ENCODE measurements at regions of chr1 and their contacts with region 1.

Region 1: GRCh38 chr1:156689035-156689952 is 12.1 kb upstream of the NES start:
- DNase-seq: peak; percentile 92
- H3K4me3 Mint-ChIP-seq: peak overlapping the region; percentile 15
- H3K27ac Mint-ChIP-seq: peak overlapping the region; percentile 2
- H3K4me1 Mint-ChIP-seq: peaks cover 38% of the 10 kb centered on the region
- H3K27me3 Mint-ChIP-seq: no peaks in the 10 kb centered on the region
- CTCF ChIP-seq: peak; percentile 82

Region 2: DNA sequence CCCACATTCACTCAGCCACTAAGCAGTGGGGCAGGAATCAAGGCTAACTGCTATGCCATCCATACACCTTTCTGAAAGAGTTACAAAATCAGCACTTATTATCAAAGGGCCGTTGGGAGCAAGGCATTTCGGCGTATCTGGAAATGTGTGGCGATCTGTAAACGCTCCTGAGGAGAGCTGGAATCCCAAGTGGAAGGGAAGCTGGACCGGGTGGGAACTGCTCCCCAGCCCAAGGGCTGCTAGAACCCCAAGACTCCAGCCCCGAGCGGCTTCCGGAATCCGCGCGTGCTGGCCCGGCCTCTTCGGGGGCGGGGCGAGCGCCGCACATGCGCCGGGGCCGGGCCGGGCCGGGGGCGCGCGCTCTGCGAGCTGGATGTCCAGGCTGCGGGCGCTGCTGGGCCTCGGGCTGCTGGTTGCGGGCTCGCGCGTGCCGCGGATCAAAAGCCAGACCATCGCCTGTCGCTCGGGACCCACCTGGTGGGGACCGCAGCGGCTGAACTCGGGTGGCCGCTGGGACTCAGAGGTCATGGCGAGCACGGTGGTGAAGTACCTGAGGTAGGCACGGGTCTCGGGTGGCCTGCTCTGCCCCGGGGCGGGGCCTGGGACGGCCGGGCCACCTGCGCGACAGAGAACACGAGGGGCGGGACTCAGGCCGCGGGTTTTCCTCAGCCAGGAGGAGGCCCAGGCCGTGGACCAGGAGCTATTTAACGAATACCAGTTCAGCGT is 97.7 kb before region 1 on chr1 and contains the start of gene NAXE:
- CTCF ChIA-PET with region 1: no interaction called
- intact Hi-C with region 1: no loop called
- DNase-seq: peak; percentile 82
- H3K4me3 Mint-ChIP-seq: peak within 1 kb of the TSS; percentile 76
- H3K27ac Mint-ChIP-seq: peak within 1 kb of the TSS; percentile 60
- H3K4me1 Mint-ChIP-seq: peaks cover 6% of the 10 kb centered on the region
- H3K27me3 Mint-ChIP-seq: no peaks in the 10 kb centered on the region
- CTCF ChIP-seq: no peak
- total RNA-seq, gene NAXE: 129 and 143 TPM in 2 replicates

Region 3: GRCh38 chr1:156625436-156626078 is 63.7 kb before region 1 on chr1:
- CTCF ChIA-PET with region 1: interaction called, 13 read pairs
- intact Hi-C with region 1: no loop called
- DNase-seq: peak; percentile 72
- H3K4me3 Mint-ChIP-seq: peak overlapping the region; percentile 45
- H3K27ac Mint-ChIP-seq: no peak overlapping the region
- H3K4me1 Mint-ChIP-seq: peaks cover 12% of the 10 kb centered on the region
- H3K27me3 Mint-ChIP-seq: peaks cover 60% of the 10 kb centered on the region
- CTCF ChIP-seq: peak; percentile 87

Region 4: DNA sequence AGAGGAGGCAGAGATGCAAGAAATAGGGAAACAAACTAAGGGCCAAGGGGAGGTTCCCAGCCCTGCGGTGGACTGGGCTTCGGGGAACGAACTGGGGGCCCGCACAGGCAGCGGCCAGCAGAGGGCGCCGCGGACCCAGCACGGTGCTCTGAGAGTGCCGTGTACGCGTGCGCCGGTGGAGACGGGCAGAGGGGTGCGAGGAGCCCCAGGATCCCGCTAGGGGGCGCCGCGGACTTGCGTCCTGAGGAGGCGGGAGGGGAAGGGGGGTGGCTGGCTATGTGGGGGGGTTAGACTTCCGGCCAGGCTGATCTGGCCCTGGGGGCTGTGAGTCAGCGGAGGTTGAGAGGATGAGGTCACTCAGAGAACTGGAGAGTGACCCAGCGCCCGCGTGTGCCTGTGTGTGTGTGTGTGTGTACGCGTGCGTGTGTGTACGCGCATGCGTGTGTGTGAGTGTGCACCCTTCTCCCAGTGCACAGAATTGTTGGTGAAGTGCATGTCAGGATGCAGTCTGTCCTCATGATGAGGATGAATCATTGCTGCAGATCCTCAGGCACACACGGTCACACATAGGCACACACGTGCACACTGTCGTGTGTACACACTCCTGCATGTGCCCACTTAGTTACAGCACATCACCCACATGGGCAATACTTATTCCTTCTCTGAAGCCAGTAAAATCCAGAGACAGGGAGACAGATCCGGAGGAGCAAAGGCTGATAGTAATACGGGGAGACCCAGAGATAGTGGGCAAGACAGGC is 29.1 kb before region 1 on chr1:
- CTCF ChIA-PET with region 1: interaction called, 21 read pairs
- intact Hi-C with region 1: no loop called
- DNase-seq: peak; percentile 99
- H3K4me3 Mint-ChIP-seq: peak overlapping the region; percentile 87
- H3K27ac Mint-ChIP-seq: peak overlapping the region; percentile 88
- H3K4me1 Mint-ChIP-seq: peaks cover 77% of the 10 kb centered on the region
- H3K27me3 Mint-ChIP-seq: no peaks in the 10 kb centered on the region
- CTCF ChIP-seq: peak; percentile 98

Region 5: DNA sequence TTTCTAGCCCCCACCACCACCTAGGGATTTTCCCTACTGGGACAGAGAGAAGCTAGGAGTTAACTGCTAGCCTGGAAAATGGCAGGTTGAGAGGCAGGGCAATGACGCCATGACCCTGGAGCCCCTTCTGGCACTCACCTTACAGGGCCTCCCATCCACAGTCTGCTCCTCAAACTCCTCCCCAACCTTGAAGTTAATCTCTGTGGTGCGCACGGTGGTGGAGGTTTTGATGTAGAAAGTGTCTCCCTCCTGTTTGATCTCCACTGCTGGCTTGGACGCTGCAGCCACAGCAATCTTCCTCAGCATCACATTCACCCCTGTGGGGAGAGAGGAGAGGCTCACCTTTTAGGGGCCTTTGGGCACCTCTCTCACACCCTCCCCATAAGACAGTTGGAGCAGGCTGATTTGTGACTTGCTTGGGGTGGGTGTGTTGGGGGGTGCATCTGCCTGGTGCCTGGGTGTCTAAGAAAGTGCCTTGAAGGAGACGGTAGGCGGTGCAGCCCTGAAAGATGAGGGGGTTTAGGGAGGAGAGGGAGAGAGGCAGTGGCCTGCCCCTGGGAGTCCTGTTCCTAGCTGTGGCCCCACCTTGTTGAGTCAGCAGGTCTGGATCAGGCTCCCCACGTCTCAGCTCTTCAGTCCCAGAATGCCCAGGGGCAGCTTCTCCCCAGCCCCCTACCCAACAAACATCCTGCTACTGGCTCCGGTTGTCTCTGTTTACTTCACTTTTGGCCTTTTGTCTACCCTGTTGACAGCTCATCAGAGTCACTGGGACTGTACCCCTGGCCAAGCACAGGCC is 11.6 kb after region 1 on chr1:
- CTCF ChIA-PET with region 1: interaction called, 130 read pairs
- intact Hi-C with region 1: loop called (anchors 1 kb)
- DNase-seq: no peak
- H3K4me3 Mint-ChIP-seq: no peak overlapping the region
- H3K27ac Mint-ChIP-seq: no peak overlapping the region
- H3K4me1 Mint-ChIP-seq: peaks cover 10% of the 10 kb centered on the region
- H3K27me3 Mint-ChIP-seq: peaks cover 5% of the 10 kb centered on the region
- CTCF ChIP-seq: no peak

Region 6: GRCh38 chr1:156705918-156706656 is 16.8 kb after region 1 on chr1:
- CTCF ChIA-PET with region 1: interaction called, 130 read pairs
- intact Hi-C with region 1: loop called (anchors 1 kb)
- DNase-seq: peak; percentile 72
- H3K4me3 Mint-ChIP-seq: peak overlapping the region; percentile 67
- H3K27ac Mint-ChIP-seq: peak overlapping the region; percentile 64
- H3K4me1 Mint-ChIP-seq: peaks cover 37% of the 10 kb centered on the region
- H3K27me3 Mint-ChIP-seq: peaks cover 13% of the 10 kb centered on the region
- CTCF ChIP-seq: peak; percentile 96

Region 7: DNA sequence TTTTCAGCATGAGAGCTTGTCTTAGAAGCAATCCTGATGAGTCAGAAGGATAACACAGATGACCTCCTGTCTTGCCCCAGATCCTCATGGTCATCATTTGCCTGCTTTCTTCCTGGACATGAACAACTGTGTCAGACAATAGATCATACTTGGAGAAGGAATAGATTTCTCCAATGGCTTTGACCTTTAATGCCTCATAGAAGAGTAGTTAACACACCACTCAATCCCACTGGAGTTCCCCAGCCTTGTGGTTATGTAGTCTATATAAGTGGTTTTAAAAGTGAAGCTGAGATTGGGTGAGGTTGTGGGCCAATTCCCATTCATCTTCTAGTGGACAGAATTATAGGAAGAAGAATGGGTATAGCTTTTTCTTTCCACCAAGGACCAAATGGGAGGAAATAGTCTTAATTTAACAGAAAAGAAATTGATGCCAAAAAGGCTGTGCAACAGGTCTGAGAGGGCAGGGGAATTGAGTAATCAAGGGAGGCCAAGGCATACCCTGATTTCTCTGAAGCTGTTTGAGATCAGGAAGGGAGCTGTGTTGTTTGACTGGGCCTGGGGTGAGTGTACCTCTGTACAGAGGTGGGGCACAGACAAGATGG is 92.4 kb after region 1 on chr1:
- CTCF ChIA-PET with region 1: no interaction called
- intact Hi-C with region 1: no loop called
- DNase-seq: no peak
- H3K4me3 Mint-ChIP-seq: no peak overlapping the region
- H3K27ac Mint-ChIP-seq: no peak overlapping the region
- H3K4me1 Mint-ChIP-seq: peaks cover 26% of the 10 kb centered on the region
- H3K27me3 Mint-ChIP-seq: no peaks in the 10 kb centered on the region
- CTCF ChIP-seq: no peak

Region 8: DNA sequence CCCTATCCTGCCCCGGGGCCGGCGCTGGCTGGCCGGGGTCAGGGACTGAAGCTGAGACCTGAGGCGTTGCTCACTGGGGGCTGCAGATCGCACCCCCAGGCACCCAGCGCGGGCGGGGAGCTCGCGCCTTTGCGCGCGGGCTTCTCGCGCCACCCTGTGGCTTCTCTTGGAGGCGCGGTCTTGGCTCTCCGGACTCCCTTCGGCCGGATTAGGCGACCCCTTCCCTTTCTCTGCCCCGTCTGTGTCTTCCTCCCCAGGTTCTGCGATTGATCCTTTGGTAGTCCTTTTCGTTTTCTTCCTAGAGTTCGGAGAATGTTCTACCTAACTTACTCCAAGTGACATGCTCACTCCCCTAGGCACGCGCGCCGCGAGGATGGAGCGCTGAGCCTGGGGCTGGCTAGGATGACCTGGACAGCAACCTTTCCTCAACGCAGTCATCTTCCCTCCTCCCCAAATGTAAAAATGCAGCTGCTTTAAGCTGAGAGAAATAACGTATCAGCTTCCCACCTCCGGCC is 170.9 kb after region 1 on chr1:
- CTCF ChIA-PET with region 1: interaction called, 45 read pairs
- intact Hi-C with region 1: loop called (anchors 10 kb)
- DNase-seq: peak; percentile 63
- H3K4me3 Mint-ChIP-seq: peak overlapping the region; percentile 58
- H3K27ac Mint-ChIP-seq: no peak overlapping the region
- H3K4me1 Mint-ChIP-seq: peaks cover 28% of the 10 kb centered on the region
- H3K27me3 Mint-ChIP-seq: peaks cover 96% of the 10 kb centered on the region
- CTCF ChIP-seq: peak; percentile 94

Region 9: GRCh38 chr1:156892190-156893047 is 203.1 kb after region 1 on chr1:
- CTCF ChIA-PET with region 1: interaction called, 25 read pairs
- intact Hi-C with region 1: loop called (anchors 1 kb)
- DNase-seq: peak; percentile 96
- H3K4me3 Mint-ChIP-seq: peak overlapping the region; percentile 33
- H3K27ac Mint-ChIP-seq: no peak overlapping the region
- H3K4me1 Mint-ChIP-seq: peaks cover 14% of the 10 kb centered on the region
- H3K27me3 Mint-ChIP-seq: peaks cover 58% of the 10 kb centered on the region
- CTCF ChIP-seq: peak; percentile 71